ENCODE measurements at regions of chr9 and their contacts with region 1.

Region 1: DNA sequence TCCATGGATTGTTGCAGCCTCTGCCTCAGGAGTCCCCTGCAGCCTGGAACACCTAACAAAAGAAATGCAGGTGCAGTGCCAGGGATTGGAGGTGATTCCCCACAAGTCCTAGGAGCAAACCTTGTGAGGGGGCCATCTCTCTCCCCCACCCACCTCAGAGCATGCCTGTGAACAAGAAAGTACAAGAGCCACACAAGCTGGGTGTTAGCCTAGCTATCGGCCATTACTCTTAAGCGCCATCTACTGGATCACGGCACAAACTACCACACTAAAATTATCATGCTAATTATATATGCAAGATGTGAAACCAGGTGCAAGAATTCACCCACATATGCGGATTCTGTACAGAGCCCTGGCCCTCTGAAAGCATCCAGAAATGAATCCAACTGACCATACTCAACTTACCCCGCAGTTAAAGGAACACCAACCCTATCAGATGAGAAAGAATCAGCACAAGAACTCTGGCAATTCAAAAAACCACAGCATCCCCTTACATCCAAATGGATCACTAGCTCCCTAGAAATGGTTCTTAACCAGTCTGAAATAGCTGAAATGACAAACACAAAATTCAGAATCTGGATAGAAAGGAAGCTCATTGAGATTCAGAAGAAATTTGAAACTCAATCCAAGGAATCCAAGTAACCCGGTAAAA is 16.5 kb upstream of the PRSS3 start:
- DNase-seq: peak; percentile 69
- ATAC-seq: peak; percentile 86
- H3K4me3 Mint-ChIP-seq: no peak overlapping the region
- H3K27ac Mint-ChIP-seq: no peak overlapping the region
- H3K4me1 Mint-ChIP-seq: peaks cover 7% of the 10 kb centered on the region
- H3K27me3 Mint-ChIP-seq: peaks cover 24% of the 10 kb centered on the region

Region 2: GRCh38 chr9:33623658-33624586 is 154.9 kb before region 1 on chr9:
- CTCF ChIA-PET with region 1: interaction called, 21 read pairs
- POLR2A ChIA-PET with region 1: no interaction called
- DNase-seq: peak; percentile 79
- ATAC-seq: peak; percentile 98
- H3K4me3 Mint-ChIP-seq: no peak overlapping the region
- H3K27ac Mint-ChIP-seq: no peak overlapping the region
- H3K4me1 Mint-ChIP-seq: peaks cover 3% of the 10 kb centered on the region
- H3K27me3 Mint-ChIP-seq: peaks cover 28% of the 10 kb centered on the region

Region 3: DNA sequence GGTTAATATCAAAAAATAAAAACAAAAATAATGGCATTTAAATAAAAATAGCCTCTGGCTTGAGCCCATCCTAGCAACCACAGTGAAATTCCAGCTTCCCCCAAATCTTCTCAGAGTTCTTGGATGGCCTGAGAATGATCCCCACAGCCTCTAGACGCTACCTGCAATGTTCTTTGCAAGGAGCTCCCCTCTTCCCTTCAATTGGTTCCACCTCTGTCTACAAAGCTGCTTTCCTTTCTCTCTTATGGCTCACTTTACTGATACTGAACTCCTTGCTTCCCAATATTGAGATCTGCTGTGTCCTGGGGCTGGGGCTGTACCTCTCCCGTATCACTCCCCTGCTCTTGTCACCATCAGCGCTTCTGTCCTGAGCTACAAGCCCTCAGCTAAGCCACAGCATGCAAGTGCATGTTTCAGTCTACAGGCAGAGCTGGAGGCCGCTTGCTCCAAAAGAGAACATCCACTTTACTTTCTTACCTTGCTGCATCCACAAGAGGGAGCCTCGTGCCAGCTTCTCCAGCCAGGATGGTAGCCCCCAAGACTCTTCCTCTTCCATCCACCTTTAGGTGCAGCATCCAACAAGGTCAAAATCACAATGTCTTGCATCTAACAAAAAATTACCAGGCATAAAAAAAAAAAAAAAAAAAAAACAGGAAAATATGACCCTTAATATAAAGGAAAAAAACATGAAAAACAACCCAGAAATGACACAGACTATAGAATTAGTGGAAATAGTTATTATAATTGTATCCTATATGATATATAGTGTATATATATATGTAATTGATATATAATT is 40.8 kb before region 1 on chr9:
- CTCF ChIA-PET with region 1: interaction called, 69 read pairs
- POLR2A ChIA-PET with region 1: no interaction called
- DNase-seq: peak; percentile 56
- ATAC-seq: peak; percentile 60
- H3K4me3 Mint-ChIP-seq: no peak overlapping the region
- H3K27ac Mint-ChIP-seq: no peak overlapping the region
- H3K4me1 Mint-ChIP-seq: no peaks in the 10 kb centered on the region
- H3K27me3 Mint-ChIP-seq: peaks cover 30% of the 10 kb centered on the region

Region 4: GRCh38 chr9:33750307-33750838 is 28.5 kb before region 1 on chr9:
- CTCF ChIA-PET with region 1: interaction called, 21 read pairs
- POLR2A ChIA-PET with region 1: no interaction called
- DNase-seq: no peak
- ATAC-seq: no peak
- H3K4me3 Mint-ChIP-seq: no peak overlapping the region
- H3K27ac Mint-ChIP-seq: no peak overlapping the region
- H3K4me1 Mint-ChIP-seq: peaks cover 45% of the 10 kb centered on the region
- H3K27me3 Mint-ChIP-seq: peaks cover 74% of the 10 kb centered on the region

Region 5: DNA sequence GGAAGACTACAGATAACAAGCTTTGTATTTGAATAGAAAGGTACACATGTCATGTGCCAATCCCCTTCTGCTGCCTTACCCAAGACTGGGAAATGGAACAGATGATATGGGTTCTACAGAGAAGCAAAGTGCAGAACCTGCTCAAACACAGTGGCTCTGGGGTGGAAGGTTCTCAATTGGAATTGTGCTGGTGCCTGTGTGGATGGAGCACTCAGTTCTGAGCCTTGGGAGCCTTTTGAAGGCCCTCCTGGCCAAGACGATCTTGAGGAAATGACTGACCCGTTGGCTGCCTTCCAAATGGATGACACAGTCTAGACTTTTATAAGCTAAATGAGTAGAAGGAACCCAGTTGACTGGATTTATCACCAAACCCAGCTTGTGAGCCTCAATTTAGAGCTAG is 12.3 kb after region 1 on chr9:
- CTCF ChIA-PET with region 1: interaction called, 17 read pairs
- POLR2A ChIA-PET with region 1: no interaction called
- DNase-seq: no peak
- ATAC-seq: no peak
- H3K4me3 Mint-ChIP-seq: no peak overlapping the region
- H3K27ac Mint-ChIP-seq: no peak overlapping the region
- H3K4me1 Mint-ChIP-seq: no peaks in the 10 kb centered on the region
- H3K27me3 Mint-ChIP-seq: peaks cover 54% of the 10 kb centered on the region

Region 6: DNA sequence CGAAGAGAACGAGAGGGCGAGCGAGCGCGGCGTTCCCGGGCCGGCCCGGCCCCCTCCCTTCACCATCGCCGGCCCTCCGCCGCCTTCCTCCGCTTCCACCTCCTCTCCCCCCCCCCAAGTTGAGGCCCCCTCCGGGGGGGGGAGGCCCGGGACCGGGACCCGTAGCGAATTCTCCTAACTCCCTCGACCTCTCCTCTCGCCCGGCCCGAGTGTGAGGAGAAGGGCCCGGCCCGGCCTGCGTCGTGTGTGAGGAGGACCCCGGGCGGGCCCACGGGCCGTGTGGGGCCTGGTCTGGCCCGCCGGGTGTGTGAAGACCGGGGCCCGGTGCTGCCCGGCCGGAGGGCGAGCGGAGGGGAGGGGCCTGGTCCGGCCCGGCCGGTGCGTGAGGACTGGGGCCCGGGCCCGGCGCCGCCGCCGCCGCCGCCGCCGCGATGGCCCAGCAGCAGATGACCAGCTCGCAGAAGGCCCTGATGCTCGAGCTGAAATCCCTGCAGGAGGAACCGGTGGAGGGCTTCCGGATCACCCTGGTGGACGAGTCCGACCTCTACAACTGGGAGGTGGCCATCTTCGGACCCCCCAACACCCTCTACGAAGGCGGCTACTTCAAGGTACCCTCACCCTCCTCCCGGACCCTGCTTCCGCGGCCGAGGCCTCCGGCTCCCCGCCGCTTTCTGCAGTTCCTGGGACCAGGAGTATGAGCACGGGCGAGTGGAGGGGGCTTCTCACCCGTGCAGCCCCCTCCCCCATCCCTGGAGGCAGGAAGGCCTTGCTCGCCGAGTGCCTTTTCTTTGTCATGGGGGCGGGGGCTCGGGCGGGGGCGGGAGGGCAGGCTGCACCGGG is 38.7 kb after region 1 on chr9:
- CTCF ChIA-PET with region 1: interaction called, 12 read pairs
- POLR2A ChIA-PET with region 1: no interaction called
- DNase-seq: peak; percentile 66
- ATAC-seq: peak; percentile 27
- H3K4me3 Mint-ChIP-seq: peak overlapping the region; percentile 91
- H3K27ac Mint-ChIP-seq: peak overlapping the region; percentile 93
- H3K4me1 Mint-ChIP-seq: peaks cover 48% of the 10 kb centered on the region
- H3K27me3 Mint-ChIP-seq: peaks cover under 1% of the 10 kb centered on the region